Vagina (tissue), 2 donors: ENCODE measurements at regions of chr1 and their contacts with region 1.

Region 1: GRCh38 chr1:182391362-182392044 is at the start of gene GLUL:
- DNase-seq: peak in 1 of 2 donors; percentile 97
- H3K4me3 ChIP-seq: peak within 1 kb of the TSS; percentile 81 to 88
- H3K27ac ChIP-seq: peak within 1 kb of the TSS; percentile 97
- H3K4me1 ChIP-seq: peaks cover 41% of the 10 kb centered on the region
- H3K27me3 ChIP-seq: no peaks in the 10 kb centered on the region
- CTCF ChIP-seq: no peak
- POLR2A ChIP-seq: peak; percentile 72 to 99
- total RNA-seq, gene GLUL: 2,462 TPM

Region 2: GRCh38 chr1:182143154-182143657 is 248.3 kb before region 1 on chr1:
- intact Hi-C with region 1: loop called (anchors 1 kb)
- DNase-seq: no peak
- H3K4me3 ChIP-seq: no peak overlapping the region
- H3K27ac ChIP-seq: peak overlapping the region; percentile 96
- H3K4me1 ChIP-seq: peaks cover 66% of the 10 kb centered on the region
- H3K27me3 ChIP-seq: no peaks in the 10 kb centered on the region
- CTCF ChIP-seq: peak; percentile 93 to 98 (median 96)
- POLR2A ChIP-seq: no peak

Region 3: DNA sequence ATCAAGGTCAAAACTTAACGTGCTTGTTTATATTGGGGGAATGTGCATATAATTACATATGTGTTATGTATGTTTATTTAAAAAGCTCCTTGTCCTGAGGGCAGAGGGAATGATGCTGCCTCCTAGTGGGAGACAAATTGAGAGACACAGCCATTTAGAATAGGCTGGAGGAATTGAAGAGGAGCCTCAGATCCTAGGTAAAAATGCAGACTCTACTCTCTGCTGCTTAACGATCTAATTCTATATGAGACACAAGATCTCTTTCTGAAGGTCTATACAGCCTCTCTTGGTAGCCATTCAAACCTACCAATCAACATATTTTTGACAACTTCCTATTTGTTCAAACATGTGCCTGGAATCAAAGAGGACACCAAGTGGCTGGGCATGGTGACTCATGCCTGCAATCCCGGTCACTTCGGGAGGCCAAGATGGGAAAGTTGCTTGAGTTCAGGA is 193.4 kb before region 1 on chr1:
- intact Hi-C with region 1: loop called (anchors 2 kb)
- DNase-seq: no peak
- H3K4me3 ChIP-seq: no peak overlapping the region
- H3K27ac ChIP-seq: peak overlapping the region; percentile 75
- H3K4me1 ChIP-seq: peaks cover 26% of the 10 kb centered on the region
- H3K27me3 ChIP-seq: no peaks in the 10 kb centered on the region
- CTCF ChIP-seq: peak in 1 of 3 experiments; percentile 13
- POLR2A ChIP-seq: no peak

Region 4: DNA sequence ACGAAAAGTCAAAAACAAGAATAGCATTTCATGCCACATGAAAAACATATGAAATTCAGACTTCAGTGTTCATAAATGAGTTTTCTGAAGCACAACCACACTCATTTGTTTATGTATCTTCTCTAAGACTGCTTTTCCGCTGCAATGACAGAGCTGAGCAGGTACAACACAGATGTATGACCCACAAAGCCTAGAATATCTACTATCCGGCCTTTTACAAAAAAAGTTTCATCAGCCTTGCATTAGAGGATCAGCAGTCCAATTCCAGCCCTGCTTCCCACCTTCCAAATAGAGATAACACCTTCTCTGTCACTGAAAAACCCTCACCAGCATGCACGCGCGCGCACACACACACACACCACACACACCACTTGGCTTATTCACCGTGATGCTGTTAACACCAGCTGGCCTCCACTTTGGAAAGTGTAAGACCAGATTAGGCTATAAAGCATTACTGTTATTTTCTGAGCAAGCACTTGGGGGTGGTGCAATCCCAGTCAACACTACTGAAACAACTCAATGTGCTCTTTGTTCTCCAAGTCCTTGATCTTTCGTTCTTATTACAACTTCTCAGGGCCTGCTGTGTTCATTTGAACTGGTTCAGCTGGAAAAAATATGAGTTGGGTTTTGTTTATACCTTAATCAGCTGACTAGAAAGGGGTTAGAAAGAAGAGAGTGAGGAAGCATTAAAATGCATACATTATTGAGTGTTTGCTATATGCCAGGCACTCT is 89.9 kb before region 1 on chr1:
- intact Hi-C with region 1: loop called (anchors 10 kb)
- DNase-seq: no peak
- H3K4me3 ChIP-seq: no peak overlapping the region
- H3K27ac ChIP-seq: no peak overlapping the region
- H3K4me1 ChIP-seq: peaks cover 30% of the 10 kb centered on the region
- H3K27me3 ChIP-seq: no peaks in the 10 kb centered on the region
- CTCF ChIP-seq: no peak
- POLR2A ChIP-seq: no peak

Region 5: GRCh38 chr1:182348961-182349747 is 42.3 kb before region 1 on chr1:
- intact Hi-C with region 1: no loop called
- DNase-seq: peak in 1 of 2 donors; percentile 55
- H3K4me3 ChIP-seq: no peak overlapping the region
- H3K27ac ChIP-seq: no peak overlapping the region
- H3K4me1 ChIP-seq: no peaks in the 10 kb centered on the region
- H3K27me3 ChIP-seq: no peaks in the 10 kb centered on the region
- CTCF ChIP-seq: no peak
- POLR2A ChIP-seq: no peak